Naive thymus-derived CD4-positive, alpha-beta T cell (primary cell): ENCODE measurements at regions of chr7 and their contacts with region 1.

Region 1: GRCh38 chr7:55365675-55366460 is 731 bp downstream of the LANCL2 start:
- DNase-seq: peak; percentile 95 to 100 (median 99)
- ATAC-seq: peak; percentile 96
- H3K4me3 ChIP-seq: peak overlapping the region; percentile 95
- H3K4me3 Mint-ChIP-seq: peak overlapping the region; percentile 84 to 98 (median 95)
- H3K27ac ChIP-seq: peak overlapping the region; percentile 98
- H3K27ac Mint-ChIP-seq: peak overlapping the region; percentile 96 to 100 (median 98)
- H3K4me1 ChIP-seq: peaks cover 6 to 10% of the 10 kb centered on the region in 2 donors
- H3K4me1 Mint-ChIP-seq: peaks cover 10 to 30% (median 21%) of the 10 kb centered on the region in 7 donors
- H3K27me3 ChIP-seq: no peaks in the 10 kb centered on the region
- H3K27me3 Mint-ChIP-seq: peaks cover 0 to 2% (median 0%) of the 10 kb centered on the region in 5 donors

Region 2: DNA sequence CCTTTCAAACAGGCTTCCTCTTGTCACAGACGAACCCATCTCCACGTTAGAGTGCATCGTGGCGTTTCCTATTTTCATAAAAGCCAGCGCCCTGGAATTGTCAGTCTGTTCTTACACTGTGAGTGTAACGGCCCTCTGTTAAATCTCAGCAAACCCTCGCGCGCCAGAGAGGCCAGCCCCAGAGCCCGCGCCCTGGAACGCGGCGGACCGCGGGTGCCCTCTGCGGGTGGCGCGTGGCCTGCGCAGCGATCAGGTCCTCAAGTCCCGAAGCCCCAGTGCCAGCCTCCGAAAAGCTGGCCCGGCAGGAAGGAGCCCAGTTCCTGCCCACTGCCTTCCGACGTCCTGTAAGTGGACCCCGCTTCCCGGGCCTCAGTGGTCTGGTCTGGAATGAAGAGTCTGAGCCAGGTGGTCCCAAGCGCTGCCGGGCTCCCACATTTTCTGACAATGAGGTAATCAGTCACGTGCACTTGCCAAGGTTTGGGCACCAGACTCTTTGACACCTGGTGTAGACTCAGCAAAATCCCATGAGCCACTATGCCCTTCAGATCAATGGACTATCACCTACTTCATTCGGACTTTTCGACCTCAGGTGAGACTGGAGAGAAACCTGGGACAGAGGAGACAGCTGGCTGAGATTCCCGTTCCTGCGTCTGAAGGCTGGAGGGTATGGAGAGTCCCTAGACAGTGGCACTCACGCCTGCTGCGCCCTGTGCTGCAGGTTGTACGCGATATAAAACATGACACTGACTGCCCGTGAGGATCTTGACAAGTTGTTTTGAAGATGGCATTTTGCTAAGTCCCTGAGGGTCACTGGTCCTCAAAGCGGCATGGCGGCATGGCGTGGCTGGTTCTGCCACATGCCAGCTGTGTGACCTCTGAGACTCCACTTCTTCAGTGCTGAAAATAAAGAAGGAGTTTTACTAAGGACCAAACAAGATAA is 110.1 kb before region 1 on chr7:
- CTCF ChIA-PET with region 1: no interaction called
- POLR2A ChIA-PET with region 1: interaction called, 3 read pairs
- intact Hi-C with region 1: loop called (anchors 1 kb)
- DNase-seq: peak; percentile 33 to 81 (median 56)
- ATAC-seq: peak; percentile 90
- H3K4me3 ChIP-seq: peak overlapping the region; percentile 58
- H3K4me3 Mint-ChIP-seq: peak overlapping the region; percentile 81 to 94 (median 91)
- H3K27ac ChIP-seq: no peak overlapping the region
- H3K27ac Mint-ChIP-seq: peak overlapping the region in 4 of 9 donors; percentile 30 to 80 (median 59)
- H3K4me1 ChIP-seq: peaks cover 0 to 3% of the 10 kb centered on the region in 2 donors
- H3K4me1 Mint-ChIP-seq: peaks cover 0 to 17% (median 7%) of the 10 kb centered on the region in 7 donors
- H3K27me3 ChIP-seq: peaks cover 0 to 3% of the 10 kb centered on the region in 2 donors
- H3K27me3 Mint-ChIP-seq: peaks cover 48 to 63% (median 51%) of the 10 kb centered on the region in 5 donors

Region 3: GRCh38 chr7:55415173-55415778 is 49.4 kb after region 1 on chr7:
- CTCF ChIA-PET with region 1: no interaction called
- POLR2A ChIA-PET with region 1: no interaction called
- intact Hi-C with region 1: loop called (anchors 1 kb)
- DNase-seq: peak; percentile 64 to 80 (median 73)
- ATAC-seq: peak; percentile 99
- H3K4me3 ChIP-seq: no peak overlapping the region
- H3K4me3 Mint-ChIP-seq: no peak overlapping the region
- H3K27ac ChIP-seq: no peak overlapping the region
- H3K27ac Mint-ChIP-seq: peak overlapping the region in 3 of 9 donors; percentile 2 to 39 (median 32)
- H3K4me1 ChIP-seq: no peaks in the 10 kb centered on the region
- H3K4me1 Mint-ChIP-seq: peaks cover 0 to 5% (median 2%) of the 10 kb centered on the region in 7 donors
- H3K27me3 ChIP-seq: no peaks in the 10 kb centered on the region
- H3K27me3 Mint-ChIP-seq: no peaks in the 10 kb centered on the region

Region 4: GRCh38 chr7:55534175-55534915 is 168.5 kb after region 1 on chr7:
- CTCF ChIA-PET with region 1: no interaction called
- POLR2A ChIA-PET with region 1: interaction called, 5 read pairs
- intact Hi-C with region 1: loop called in 1 of 2 experiments (anchors 1 kb)
- DNase-seq: peak in 3 of 9 donors; percentile 7 to 79 (median 36)
- ATAC-seq: peak; percentile 75
- H3K4me3 ChIP-seq: no peak overlapping the region
- H3K4me3 Mint-ChIP-seq: peak overlapping the region; percentile 75 to 86 (median 82)
- H3K27ac ChIP-seq: no peak overlapping the region
- H3K27ac Mint-ChIP-seq: peak overlapping the region; percentile 74 to 98 (median 83)
- H3K4me1 ChIP-seq: peaks cover 57 to 75% of the 10 kb centered on the region in 2 donors
- H3K4me1 Mint-ChIP-seq: peaks cover 73 to 98% (median 90%) of the 10 kb centered on the region in 7 donors
- H3K27me3 ChIP-seq: no peaks in the 10 kb centered on the region
- H3K27me3 Mint-ChIP-seq: peaks cover 0 to 2% (median 0%) of the 10 kb centered on the region in 5 donors

Region 5: GRCh38 chr7:55951637-55952351 is 585.9 kb after region 1 on chr7 and contains the start of gene MRPS17:
- CTCF ChIA-PET with region 1: no interaction called
- POLR2A ChIA-PET with region 1: no interaction called
- intact Hi-C with region 1: loop called (anchors 1 kb)
- DNase-seq: peak; percentile 86 to 96 (median 94)
- ATAC-seq: peak; percentile 100
- H3K4me3 ChIP-seq: peak within 1 kb of the TSS; percentile 68
- H3K4me3 Mint-ChIP-seq: peak within 1 kb of the TSS; percentile 84 to 99 (median 96)
- H3K27ac ChIP-seq: peak within 1 kb of the TSS; percentile 86
- H3K27ac Mint-ChIP-seq: peak within 1 kb of the TSS; percentile 92 to 98 (median 96)
- H3K4me1 ChIP-seq: peaks cover 0 to 4% of the 10 kb centered on the region in 2 donors
- H3K4me1 Mint-ChIP-seq: peaks cover 10 to 33% (median 24%) of the 10 kb centered on the region in 7 donors
- H3K27me3 ChIP-seq: no peaks in the 10 kb centered on the region
- H3K27me3 Mint-ChIP-seq: peaks cover 0 to 2% (median 0%) of the 10 kb centered on the region in 5 donors
- total RNA-seq, gene MRPS17: 8.3 to 16.7 (median 12.0) TPM